ENCODE measurements at regions of chr7 and their contacts with region 1.

Region 1: GRCh38 chr7:80151274-80151665 is 16.6 kb downstream of the GNAI1 start:
- DNase-seq: peak; percentile 61
- ATAC-seq: peak; percentile 96
- H3K4me3 Mint-ChIP-seq: no peak overlapping the region
- H3K27ac Mint-ChIP-seq: no peak overlapping the region
- H3K4me1 Mint-ChIP-seq: peaks cover 25% of the 10 kb centered on the region
- H3K27me3 Mint-ChIP-seq: peaks cover 19% of the 10 kb centered on the region

Region 2: DNA sequence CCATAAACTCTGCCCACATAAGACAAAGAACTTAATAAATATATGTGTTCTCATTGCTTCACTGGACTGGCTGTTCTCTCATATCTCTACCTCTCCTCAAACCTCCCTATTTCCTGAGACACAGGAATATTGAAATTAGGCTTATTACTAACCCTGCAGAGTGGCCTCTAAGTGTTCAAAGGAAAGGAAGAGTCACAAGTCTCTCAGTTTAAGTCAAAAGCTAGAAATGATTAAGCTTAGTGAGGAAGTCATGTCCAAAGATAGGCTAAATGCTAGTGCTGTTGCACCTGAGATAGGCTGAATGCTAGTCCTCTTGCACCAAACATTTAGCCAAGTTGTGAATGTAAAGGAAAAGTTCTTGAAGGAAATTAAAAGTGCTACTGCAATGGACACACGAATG is 24.5 kb after region 1 on chr7:
- CTCF ChIA-PET with region 1: no interaction called
- POLR2A ChIA-PET with region 1: no interaction called
- intact Hi-C with region 1: loop called (anchors 1 to 2 kb)
- DNase-seq: no peak
- ATAC-seq: peak; percentile 81
- H3K4me3 Mint-ChIP-seq: no peak overlapping the region
- H3K27ac Mint-ChIP-seq: no peak overlapping the region
- H3K4me1 Mint-ChIP-seq: peaks cover 44% of the 10 kb centered on the region
- H3K27me3 Mint-ChIP-seq: peaks cover 7% of the 10 kb centered on the region

Measured in activated CD4-positive, alpha-beta T cell treated with anti-CD3 and anti-CD28 coated beads for 36 hours (primary cell).